Activated CD8-positive, alpha-beta memory T cell treated with anti-CD3 and anti-CD28 coated beads, Interleukin-2, amount 10 ng/mL, durations not matched to agents 7 days and 5 days (primary cell): ENCODE measurements at regions of chr1 and their contacts with region 1.

Region 1: DNA sequence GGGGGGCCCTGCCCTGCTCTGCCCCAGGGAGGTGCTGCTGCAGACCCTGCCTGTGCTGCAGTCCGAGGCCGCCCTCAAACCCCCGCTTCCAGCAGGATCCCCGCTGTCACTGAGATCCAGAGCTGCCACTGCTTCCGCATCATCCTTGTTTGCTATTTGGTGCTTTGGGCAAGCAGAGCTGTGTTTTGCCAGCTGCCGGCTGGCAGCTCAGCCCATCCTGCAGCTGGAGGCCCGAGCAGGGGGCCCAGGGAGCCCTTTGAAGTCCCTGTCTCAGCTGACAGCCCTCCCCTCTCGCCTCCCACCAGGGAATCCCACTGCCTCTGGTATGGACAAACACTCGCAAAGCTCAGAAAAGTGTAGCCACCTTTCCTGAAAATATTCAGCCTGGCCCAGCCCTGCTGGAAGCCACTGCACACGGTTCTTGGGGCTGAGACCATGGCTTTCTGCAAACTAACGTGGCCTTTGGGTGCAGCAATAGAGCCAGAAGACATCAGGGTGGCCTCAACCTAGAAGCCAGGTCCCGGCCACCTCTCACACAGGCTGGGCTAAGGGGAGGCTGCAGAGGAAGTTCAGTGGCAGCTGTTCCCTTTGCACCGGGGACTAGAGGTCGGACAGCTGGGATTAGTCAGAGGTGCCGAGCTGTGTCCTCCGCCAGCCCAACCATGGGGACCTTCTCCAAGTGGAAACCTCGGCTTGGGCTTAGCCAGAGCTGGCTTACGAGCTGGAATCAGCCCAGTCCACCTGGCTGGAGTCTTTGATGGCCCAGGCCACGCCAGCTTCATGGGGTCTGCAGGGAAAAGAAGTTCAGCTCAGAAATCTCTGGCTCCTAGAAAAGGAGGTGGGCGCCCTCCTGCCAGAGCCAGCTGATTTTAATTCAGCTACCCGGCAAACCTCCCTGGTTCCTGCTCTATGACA is 107.1 kb downstream of the SPSB1 start:
- DNase-seq: no peak
- ATAC-seq: no peak
- H3K4me3 Mint-ChIP-seq: no peak overlapping the region
- H3K27ac Mint-ChIP-seq: no peak overlapping the region
- H3K4me1 Mint-ChIP-seq: peaks cover 7% of the 10 kb centered on the region
- H3K27me3 Mint-ChIP-seq: peaks cover 9% of the 10 kb centered on the region

Region 2: DNA sequence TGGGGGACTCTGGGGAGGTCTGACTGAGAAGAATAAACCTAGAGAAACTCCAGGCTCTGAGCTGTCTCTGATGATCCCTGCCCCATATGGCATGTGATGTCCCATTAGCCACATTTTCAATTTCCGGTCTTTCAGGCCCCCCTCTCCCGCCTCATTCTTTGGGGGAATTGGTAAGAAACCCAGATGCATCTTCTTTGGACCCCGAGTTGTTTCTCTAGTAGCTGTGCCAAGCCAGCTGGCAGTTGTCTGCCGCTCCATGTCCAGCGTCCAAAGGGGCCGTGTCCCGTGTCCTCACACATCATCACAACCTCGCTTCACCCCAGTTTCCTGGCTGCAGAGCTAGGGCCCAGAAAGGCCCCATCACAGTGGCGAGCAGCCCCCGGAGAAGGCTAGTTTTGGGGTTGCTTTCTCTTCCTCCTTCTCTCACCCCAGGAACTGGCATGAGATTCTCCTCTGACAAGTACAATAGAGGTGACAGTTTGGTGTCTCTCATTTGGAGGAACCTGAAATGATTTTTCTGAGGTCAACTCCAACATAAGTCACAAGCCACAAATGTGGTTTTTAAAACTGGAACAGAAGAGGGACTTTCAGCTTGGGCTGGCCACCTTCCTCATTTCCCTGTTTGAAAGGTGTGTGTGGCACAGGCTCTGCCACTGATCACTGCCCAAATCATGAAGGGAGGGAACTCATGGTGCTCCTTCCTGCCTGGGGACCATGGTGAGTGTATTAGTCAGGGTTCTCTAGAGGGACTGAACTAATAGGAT is 264.5 kb before region 1 on chr1:
- CTCF ChIA-PET with region 1: no interaction called
- DNase-seq: no peak
- ATAC-seq: peak; percentile 27
- H3K4me3 Mint-ChIP-seq: no peak overlapping the region
- H3K27ac Mint-ChIP-seq: no peak overlapping the region
- H3K4me1 Mint-ChIP-seq: peaks cover 5% of the 10 kb centered on the region
- H3K27me3 Mint-ChIP-seq: peaks cover 34% of the 10 kb centered on the region

Region 3: DNA sequence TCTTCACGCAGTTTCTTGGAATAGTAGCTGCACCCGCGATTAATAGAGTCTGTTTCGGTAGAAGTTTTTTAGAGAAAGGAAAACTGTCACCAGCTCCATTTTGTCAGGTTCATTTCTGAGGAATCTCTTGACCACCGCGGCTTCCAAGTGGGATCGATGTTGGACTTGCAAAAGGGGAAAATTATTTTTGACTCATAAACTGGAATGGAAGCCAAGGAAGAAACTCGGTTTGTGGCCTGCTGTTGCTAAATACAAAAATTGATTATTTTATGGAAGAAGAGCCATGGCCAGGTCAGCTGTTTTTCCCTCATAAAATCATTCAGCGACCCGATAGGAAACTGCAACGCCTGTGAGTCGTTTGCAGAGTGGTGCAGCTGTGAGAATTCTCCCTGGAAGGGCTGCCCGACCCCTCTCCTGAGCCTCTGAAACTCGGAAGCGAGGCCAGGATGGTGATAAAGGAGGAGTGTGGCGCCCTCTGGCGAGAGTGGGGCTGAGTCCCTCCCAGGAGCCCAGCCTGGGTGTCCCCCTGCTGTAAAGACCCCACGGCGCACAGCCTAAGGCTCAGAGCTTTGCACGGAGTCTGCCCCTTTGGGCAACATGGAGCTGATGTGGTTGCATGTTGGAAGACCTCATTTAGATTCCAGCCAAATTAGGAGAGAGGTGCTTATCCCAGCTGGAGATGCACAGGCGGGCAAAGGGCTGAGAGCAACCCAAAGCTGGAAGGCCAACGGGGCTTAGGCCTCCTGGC is 55.9 kb after region 1 on chr1:
- CTCF ChIA-PET with region 1: interaction called, 11 read pairs
- DNase-seq: peak; percentile 68
- ATAC-seq: peak; percentile 78
- H3K4me3 Mint-ChIP-seq: no peak overlapping the region
- H3K27ac Mint-ChIP-seq: no peak overlapping the region
- H3K4me1 Mint-ChIP-seq: no peaks in the 10 kb centered on the region
- H3K27me3 Mint-ChIP-seq: peaks cover 32% of the 10 kb centered on the region